BJ (cell line): ENCODE measurements at regions of chr3 and their contacts with region 1.

Region 1: DNA sequence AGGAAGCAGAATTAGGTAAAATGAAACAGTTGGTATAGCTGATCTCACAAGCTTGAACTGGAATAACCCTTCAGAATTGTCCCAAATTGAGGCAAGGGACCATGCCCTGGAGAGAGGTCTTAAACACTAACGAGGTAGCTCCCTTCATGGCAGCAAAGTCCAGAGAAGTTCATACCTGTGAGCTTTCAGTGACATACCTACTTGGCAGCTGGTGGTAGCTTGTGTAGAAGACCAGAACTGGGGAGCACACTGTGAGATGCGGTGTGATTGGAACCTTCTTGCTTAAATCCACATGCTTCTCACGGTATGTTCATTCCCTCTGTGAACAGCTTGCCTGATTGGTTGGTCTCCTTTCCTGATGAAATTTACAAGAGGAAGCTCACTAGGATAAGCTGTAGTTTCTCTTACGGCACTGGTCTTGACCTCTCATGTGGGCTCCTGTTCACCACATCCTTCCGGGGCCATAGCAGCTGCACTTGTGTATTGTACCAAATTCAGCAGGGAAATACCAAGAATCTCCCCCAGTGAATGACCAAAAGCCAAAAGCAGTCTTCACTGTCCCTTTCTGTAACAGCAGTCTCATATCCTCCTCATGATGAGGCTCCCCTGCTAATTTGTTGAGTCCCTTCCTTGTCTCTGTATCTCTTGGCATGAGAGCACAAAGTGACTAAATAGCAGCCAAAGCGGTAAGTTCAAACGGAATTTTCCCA is 483.7 kb upstream of the FRG2C start:
- DNase-seq: no peak
- H3K4me3 ChIP-seq: no peak overlapping the region
- H3K27me3 ChIP-seq: no peaks in the 10 kb centered on the region
- CTCF ChIP-seq: no peak

Region 2: DNA sequence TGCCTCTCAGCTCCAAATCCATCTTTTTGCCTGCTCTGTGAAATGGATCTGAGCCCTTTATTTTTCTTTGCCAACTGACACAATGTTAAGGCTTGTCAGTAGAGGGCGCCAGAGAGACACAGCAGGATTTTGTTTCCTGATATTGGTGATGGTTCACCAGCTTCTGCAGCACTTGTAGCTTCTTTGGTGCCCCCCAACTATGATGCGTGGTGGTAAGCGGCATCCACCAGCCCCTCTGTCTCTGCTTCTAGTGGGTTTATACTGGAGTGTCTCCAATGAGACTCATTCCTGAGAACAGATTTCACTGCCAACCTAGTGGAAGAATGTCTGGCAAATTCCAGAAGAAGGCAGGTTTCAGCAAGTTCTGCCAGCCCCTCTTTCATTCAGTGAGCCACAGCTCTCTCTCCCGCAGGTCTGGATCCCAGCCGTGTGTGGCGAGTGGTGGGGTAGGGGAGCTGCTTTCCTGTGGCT is 11.8 kb after region 1 on chr3:
- CTCF ChIA-PET with region 1: interaction called, 16 read pairs
- POLR2A ChIA-PET with region 1: no interaction called
- DNase-seq: peak; percentile 0
- H3K4me3 ChIP-seq: no peak overlapping the region
- H3K27me3 ChIP-seq: peaks cover 1% of the 10 kb centered on the region; the same call in 1 of the 2 replicates
- CTCF ChIP-seq: peak; percentile 91